ENCODE measurements at regions of chr2 and their contacts with region 1.

Region 1: DNA sequence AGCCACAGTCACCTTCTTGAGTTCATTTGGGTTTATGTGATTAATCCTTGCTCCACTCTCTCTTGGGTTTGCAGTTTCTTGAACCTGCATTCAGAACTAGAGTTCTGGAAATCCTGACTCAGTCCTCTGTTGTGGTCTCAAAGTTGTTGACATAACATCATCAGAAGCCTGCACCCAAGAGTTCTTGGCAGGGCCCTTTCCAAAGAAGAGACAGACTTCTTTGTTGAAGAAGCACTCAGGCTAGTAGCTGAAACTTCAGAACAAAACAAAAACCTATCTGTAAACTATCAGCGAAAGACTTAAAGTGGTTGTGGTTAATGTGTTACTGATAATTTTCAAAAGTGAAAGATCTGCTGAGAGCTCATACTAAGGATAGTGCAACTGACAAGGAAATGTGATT is 120.8 kb downstream of the FAM168B start:
- DNase-seq: peak; percentile 57
- ATAC-seq: peak; percentile 82
- H3K4me3 ChIP-seq: no peak overlapping the region
- H3K27ac ChIP-seq: no peak overlapping the region
- H3K4me1 ChIP-seq: no peaks in the 10 kb centered on the region
- H3K27me3 ChIP-seq: no peaks in the 10 kb centered on the region
- CTCF ChIP-seq: no peak

Region 2: GRCh38 chr2:131016826-131017741 is 44.7 kb after region 1 on chr2:
- CTCF ChIA-PET with region 1: no interaction called
- POLR2A ChIA-PET with region 1: no interaction called
- intact Hi-C with region 1: loop called (anchors 5 kb)
- DNase-seq: peak; percentile 92
- ATAC-seq: peak; percentile 89
- H3K4me3 ChIP-seq: peak overlapping the region; percentile 50
- H3K27ac ChIP-seq: peak overlapping the region; percentile 78
- H3K4me1 ChIP-seq: peaks cover 28% of the 10 kb centered on the region
- H3K27me3 ChIP-seq: no peaks in the 10 kb centered on the region
- CTCF ChIP-seq: no peak

Region 3: GRCh38 chr2:131588152-131588873 is 615.9 kb after region 1 on chr2:
- CTCF ChIA-PET with region 1: no interaction called
- POLR2A ChIA-PET with region 1: no interaction called
- intact Hi-C with region 1: no loop called
- DNase-seq: no peak
- ATAC-seq: no peak
- H3K4me3 ChIP-seq: no peak overlapping the region
- H3K27ac ChIP-seq: no peak overlapping the region
- H3K4me1 ChIP-seq: no peaks in the 10 kb centered on the region
- H3K27me3 ChIP-seq: peaks cover 69% of the 10 kb centered on the region
- CTCF ChIP-seq: no peak

Measured in PC-3 (cell line).